Activated CD8-positive, alpha-beta T cell treated with anti-CD3 and anti-CD28 coated beads, Interleukin-2, amount 10 ng/mL, durations not matched to agents 7 days and 5 days (primary cell): ENCODE measurements at regions of chr1 and their contacts with region 1.

Region 1: DNA sequence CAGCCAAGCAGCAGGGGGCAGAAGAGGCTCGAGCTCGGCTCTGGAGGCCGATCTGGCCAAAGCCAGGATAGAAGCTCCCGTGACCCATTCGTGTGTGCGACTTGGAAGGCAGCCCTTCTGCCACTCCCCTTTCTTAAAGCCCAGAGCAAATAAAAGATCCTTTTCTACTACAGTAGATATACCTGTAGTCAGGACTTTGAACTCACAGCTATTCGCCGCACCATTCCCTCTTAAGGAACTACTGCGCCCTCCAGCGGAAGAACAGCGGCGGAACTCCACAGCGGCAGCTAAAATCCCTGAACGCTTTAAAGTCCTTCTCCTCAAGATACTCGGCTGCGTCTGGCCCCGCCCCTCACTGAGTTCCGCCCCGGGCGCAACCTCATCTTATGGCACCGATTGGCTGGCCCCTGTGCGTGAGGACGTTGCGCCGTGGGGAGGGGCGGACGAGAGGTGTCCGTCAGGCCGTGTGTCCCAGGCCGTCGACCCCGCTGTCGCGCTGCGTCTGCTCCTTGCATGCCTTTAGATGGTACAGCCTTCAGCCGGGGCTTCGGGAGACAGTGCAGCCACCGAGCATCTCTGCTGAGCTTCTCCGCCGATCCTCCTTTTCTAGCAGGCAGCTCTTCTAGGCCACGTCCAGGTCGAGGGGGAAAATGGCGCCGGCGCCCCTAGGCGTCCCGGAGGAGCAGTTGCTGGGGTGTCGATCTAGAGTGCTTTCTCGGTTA is at the start of gene LRIG2:
- DNase-seq: peak; percentile 99
- ATAC-seq: peak; percentile 98
- H3K4me3 Mint-ChIP-seq: peak within 1 kb of the TSS; percentile 98
- H3K27ac Mint-ChIP-seq: peak within 1 kb of the TSS; percentile 93
- H3K4me1 Mint-ChIP-seq: peaks cover 33% of the 10 kb centered on the region
- H3K27me3 Mint-ChIP-seq: no peaks in the 10 kb centered on the region
- total RNA-seq, gene LRIG2: 13.7 to 15.6 TPM

Region 2: GRCh38 chr1:112882271-112882744 is 190.6 kb before region 1 on chr1:
- CTCF ChIA-PET with region 1: interaction called, 67 read pairs
- POLR2A ChIA-PET with region 1: no interaction called
- DNase-seq: no peak
- ATAC-seq: no peak
- H3K4me3 Mint-ChIP-seq: no peak overlapping the region
- H3K27ac Mint-ChIP-seq: no peak overlapping the region
- H3K4me1 Mint-ChIP-seq: no peaks in the 10 kb centered on the region
- H3K27me3 Mint-ChIP-seq: peaks cover 16% of the 10 kb centered on the region

Region 3: GRCh38 chr1:112950426-112950825 is 122.5 kb before region 1 on chr1:
- CTCF ChIA-PET with region 1: interaction called, 29 read pairs
- POLR2A ChIA-PET with region 1: interaction called, 4 read pairs
- DNase-seq: no peak
- ATAC-seq: no peak
- H3K4me3 Mint-ChIP-seq: no peak overlapping the region
- H3K27ac Mint-ChIP-seq: no peak overlapping the region
- H3K4me1 Mint-ChIP-seq: peaks cover 35% of the 10 kb centered on the region
- H3K27me3 Mint-ChIP-seq: no peaks in the 10 kb centered on the region

Region 4: GRCh38 chr1:112982853-112983536 is 89.9 kb before region 1 on chr1:
- CTCF ChIA-PET with region 1: interaction called, 11 read pairs
- POLR2A ChIA-PET with region 1: no interaction called
- DNase-seq: no peak
- ATAC-seq: no peak
- H3K4me3 Mint-ChIP-seq: no peak overlapping the region
- H3K27ac Mint-ChIP-seq: no peak overlapping the region
- H3K4me1 Mint-ChIP-seq: no peaks in the 10 kb centered on the region
- H3K27me3 Mint-ChIP-seq: no peaks in the 10 kb centered on the region

Region 5: DNA sequence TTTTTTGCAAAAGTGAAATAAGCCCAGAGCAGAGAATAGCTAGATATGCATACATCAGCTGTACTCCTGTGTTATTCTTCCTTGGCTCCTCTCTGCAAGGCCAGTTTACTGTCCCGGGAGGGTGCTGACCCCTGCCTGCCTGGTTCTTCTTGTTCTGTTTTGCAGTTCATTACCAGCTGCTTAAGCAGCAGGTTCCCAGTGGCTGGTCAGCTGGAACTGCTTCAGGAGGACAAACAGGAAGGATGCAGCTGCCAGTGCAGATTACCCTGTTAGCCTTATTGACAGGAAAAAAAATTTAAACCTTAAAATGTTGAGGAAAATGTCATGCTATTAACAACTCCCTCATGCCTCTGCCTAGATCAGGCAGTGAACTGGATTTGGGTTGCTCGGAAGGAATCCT is 15.9 kb before region 1 on chr1:
- CTCF ChIA-PET with region 1: interaction called, 61 read pairs
- POLR2A ChIA-PET with region 1: interaction called, 5 read pairs
- DNase-seq: no peak
- ATAC-seq: no peak
- H3K4me3 Mint-ChIP-seq: no peak overlapping the region
- H3K27ac Mint-ChIP-seq: no peak overlapping the region
- H3K4me1 Mint-ChIP-seq: peaks cover 18% of the 10 kb centered on the region
- H3K27me3 Mint-ChIP-seq: no peaks in the 10 kb centered on the region

Region 6: GRCh38 chr1:113095790-113096455 is 23.0 kb after region 1 on chr1:
- CTCF ChIA-PET with region 1: interaction called, 30 read pairs
- POLR2A ChIA-PET with region 1: no interaction called
- DNase-seq: no peak
- ATAC-seq: no peak
- H3K4me3 Mint-ChIP-seq: no peak overlapping the region
- H3K27ac Mint-ChIP-seq: no peak overlapping the region
- H3K4me1 Mint-ChIP-seq: peaks cover 4% of the 10 kb centered on the region
- H3K27me3 Mint-ChIP-seq: no peaks in the 10 kb centered on the region

Region 7: GRCh38 chr1:113146242-113147072 is 73.5 kb after region 1 on chr1:
- CTCF ChIA-PET with region 1: no interaction called
- POLR2A ChIA-PET with region 1: no interaction called
- DNase-seq: peak; percentile 36
- ATAC-seq: peak; percentile 88
- H3K4me3 Mint-ChIP-seq: no peak overlapping the region
- H3K27ac Mint-ChIP-seq: peak overlapping the region; percentile 13
- H3K4me1 Mint-ChIP-seq: peaks cover 32% of the 10 kb centered on the region
- H3K27me3 Mint-ChIP-seq: no peaks in the 10 kb centered on the region

Region 8: GRCh38 chr1:113199760-113200455 is 127.0 kb after region 1 on chr1:
- CTCF ChIA-PET with region 1: no interaction called
- POLR2A ChIA-PET with region 1: no interaction called
- DNase-seq: no peak
- ATAC-seq: no peak
- H3K4me3 Mint-ChIP-seq: no peak overlapping the region
- H3K27ac Mint-ChIP-seq: no peak overlapping the region
- H3K4me1 Mint-ChIP-seq: no peaks in the 10 kb centered on the region
- H3K27me3 Mint-ChIP-seq: peaks cover 5% of the 10 kb centered on the region

Region 9: DNA sequence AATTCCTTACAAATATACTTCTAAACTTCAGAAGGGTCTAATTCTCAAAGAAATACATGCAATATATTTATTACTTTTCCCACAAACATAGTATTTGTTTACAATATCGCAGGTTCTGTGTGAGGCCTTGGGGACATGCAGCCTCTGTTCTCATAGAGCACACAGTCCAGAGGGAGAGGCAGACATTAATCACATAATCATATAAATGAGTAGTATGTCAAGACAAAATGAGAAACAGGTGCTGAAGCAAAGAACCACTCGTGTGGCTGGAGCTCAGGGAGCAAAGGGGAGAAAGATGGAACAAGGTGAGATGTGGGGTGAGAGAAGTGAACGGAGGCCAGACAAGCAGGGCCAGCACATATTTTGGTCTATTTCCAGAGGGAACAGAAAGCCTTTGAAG is 291.0 kb after region 1 on chr1:
- CTCF ChIA-PET with region 1: no interaction called
- POLR2A ChIA-PET with region 1: no interaction called
- DNase-seq: no peak
- ATAC-seq: no peak
- H3K4me3 Mint-ChIP-seq: no peak overlapping the region
- H3K27ac Mint-ChIP-seq: no peak overlapping the region
- H3K4me1 Mint-ChIP-seq: peaks cover 4% of the 10 kb centered on the region
- H3K27me3 Mint-ChIP-seq: peaks cover 2% of the 10 kb centered on the region